Activated CD4-positive, alpha-beta T cell treated with anti-CD3 and anti-CD28 coated beads for 36 hours (primary cell): ENCODE measurements at regions of chr10 and their contacts with region 1.

Region 1: GRCh38 chr10:124461438-124462347 is at the start of gene LHPP:
- DNase-seq: peak; percentile 92
- ATAC-seq: peak; percentile 97
- H3K4me3 Mint-ChIP-seq: peak within 1 kb of the TSS; percentile 71
- H3K27ac Mint-ChIP-seq: peak within 1 kb of the TSS; percentile 96
- H3K4me1 Mint-ChIP-seq: peaks cover 25% of the 10 kb centered on the region
- H3K27me3 Mint-ChIP-seq: peaks cover 2% of the 10 kb centered on the region
- total RNA-seq, gene LHPP: 11.5 to 14.0 TPM

Region 2: GRCh38 chr10:123008439-123009205 is 1453.1 kb before region 1 on chr10 and contains the starts of genes ACADSB and IKZF5:
- CTCF ChIA-PET with region 1: no interaction called
- POLR2A ChIA-PET with region 1: no interaction called
- intact Hi-C with region 1: loop called in 1 of 2 experiments (anchors 1 kb)
- DNase-seq: peak; percentile 98
- ATAC-seq: peak; percentile 87
- H3K4me3 Mint-ChIP-seq: peak within 1 kb of the TSS; percentile 95
- H3K27ac Mint-ChIP-seq: peak within 1 kb of the TSS; percentile 99
- H3K4me1 Mint-ChIP-seq: peaks cover 42% of the 10 kb centered on the region
- H3K27me3 Mint-ChIP-seq: no peaks in the 10 kb centered on the region
- total RNA-seq, gene ACADSB: 24.0 to 25.5 TPM
- total RNA-seq, gene IKZF5: 9.4 to 14.1 TPM

Region 3: GRCh38 chr10:124145109-124145870 is 316.4 kb before region 1 on chr10:
- CTCF ChIA-PET with region 1: no interaction called
- POLR2A ChIA-PET with region 1: no interaction called
- intact Hi-C with region 1: no loop called
- DNase-seq: no peak
- ATAC-seq: no peak
- H3K4me3 Mint-ChIP-seq: no peak overlapping the region
- H3K27ac Mint-ChIP-seq: no peak overlapping the region
- H3K4me1 Mint-ChIP-seq: no peaks in the 10 kb centered on the region
- H3K27me3 Mint-ChIP-seq: peaks cover 2% of the 10 kb centered on the region

Region 4: DNA sequence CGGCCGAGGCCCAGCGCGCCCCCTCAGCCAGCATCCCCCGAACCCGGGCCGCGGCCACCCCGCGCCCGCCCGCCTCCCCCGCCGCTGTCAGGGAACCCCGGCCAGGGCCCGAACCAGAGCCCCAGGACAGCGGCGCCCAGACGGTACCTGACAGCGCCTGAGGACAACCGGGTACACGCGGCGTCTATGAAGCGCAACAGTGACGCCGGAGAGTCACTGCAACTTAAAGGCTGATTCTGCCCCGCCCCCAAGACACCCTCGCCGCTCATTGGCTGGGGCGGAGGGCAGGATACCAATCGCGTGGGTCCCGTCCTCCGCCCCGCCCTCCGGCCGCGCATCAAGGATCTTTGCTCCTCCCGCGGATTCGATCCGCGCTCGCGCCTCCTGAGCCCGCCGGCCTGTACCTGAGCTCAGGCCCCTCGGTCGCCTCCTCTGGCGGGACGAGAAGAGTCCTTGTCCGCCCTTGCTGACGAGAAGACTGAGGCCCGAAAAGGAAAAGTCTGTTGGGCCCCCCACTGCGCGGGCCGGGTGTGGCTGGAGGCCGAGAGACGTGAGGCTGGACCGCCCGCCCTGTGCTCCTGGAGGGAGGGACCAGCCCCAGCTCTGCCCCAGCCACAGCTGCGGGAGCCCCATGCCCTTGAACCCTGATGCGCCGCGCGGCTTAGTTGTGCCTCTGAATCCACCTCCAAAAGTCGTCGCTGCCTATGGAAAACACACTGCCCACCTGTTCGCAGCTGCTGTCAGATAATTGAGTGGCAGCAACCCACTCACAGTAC is 42.8 kb before region 1 on chr10 and contains the start of gene OAT:
- CTCF ChIA-PET with region 1: interaction called, 3 read pairs
- POLR2A ChIA-PET with region 1: no interaction called
- intact Hi-C with region 1: loop called (anchors 1 kb)
- DNase-seq: peak; percentile 99
- ATAC-seq: peak; percentile 98
- H3K4me3 Mint-ChIP-seq: peak within 1 kb of the TSS; percentile 78
- H3K27ac Mint-ChIP-seq: peak within 1 kb of the TSS; percentile 21
- H3K4me1 Mint-ChIP-seq: peaks cover 16% of the 10 kb centered on the region
- H3K27me3 Mint-ChIP-seq: no peaks in the 10 kb centered on the region
- total RNA-seq, gene OAT: 36.5 to 39.6 TPM

Region 5: GRCh38 chr10:124477614-124478363 is 16.1 kb after region 1 on chr10:
- CTCF ChIA-PET with region 1: no interaction called
- POLR2A ChIA-PET with region 1: no interaction called
- intact Hi-C with region 1: no loop called
- DNase-seq: no peak
- ATAC-seq: no peak
- H3K4me3 Mint-ChIP-seq: no peak overlapping the region
- H3K27ac Mint-ChIP-seq: no peak overlapping the region
- H3K4me1 Mint-ChIP-seq: peaks cover 2% of the 10 kb centered on the region
- H3K27me3 Mint-ChIP-seq: no peaks in the 10 kb centered on the region

Region 6: GRCh38 chr10:124802313-124802675 is 340.6 kb after region 1 on chr10:
- CTCF ChIA-PET with region 1: no interaction called
- POLR2A ChIA-PET with region 1: interaction called, 7 read pairs
- intact Hi-C with region 1: loop called (anchors 1 to 2 kb)
- DNase-seq: no peak
- ATAC-seq: peak; percentile 43
- H3K4me3 Mint-ChIP-seq: peak overlapping the region; percentile 91
- H3K27ac Mint-ChIP-seq: peak overlapping the region; percentile 90
- H3K4me1 Mint-ChIP-seq: peaks cover 19% of the 10 kb centered on the region
- H3K27me3 Mint-ChIP-seq: no peaks in the 10 kb centered on the region

Region 7: DNA sequence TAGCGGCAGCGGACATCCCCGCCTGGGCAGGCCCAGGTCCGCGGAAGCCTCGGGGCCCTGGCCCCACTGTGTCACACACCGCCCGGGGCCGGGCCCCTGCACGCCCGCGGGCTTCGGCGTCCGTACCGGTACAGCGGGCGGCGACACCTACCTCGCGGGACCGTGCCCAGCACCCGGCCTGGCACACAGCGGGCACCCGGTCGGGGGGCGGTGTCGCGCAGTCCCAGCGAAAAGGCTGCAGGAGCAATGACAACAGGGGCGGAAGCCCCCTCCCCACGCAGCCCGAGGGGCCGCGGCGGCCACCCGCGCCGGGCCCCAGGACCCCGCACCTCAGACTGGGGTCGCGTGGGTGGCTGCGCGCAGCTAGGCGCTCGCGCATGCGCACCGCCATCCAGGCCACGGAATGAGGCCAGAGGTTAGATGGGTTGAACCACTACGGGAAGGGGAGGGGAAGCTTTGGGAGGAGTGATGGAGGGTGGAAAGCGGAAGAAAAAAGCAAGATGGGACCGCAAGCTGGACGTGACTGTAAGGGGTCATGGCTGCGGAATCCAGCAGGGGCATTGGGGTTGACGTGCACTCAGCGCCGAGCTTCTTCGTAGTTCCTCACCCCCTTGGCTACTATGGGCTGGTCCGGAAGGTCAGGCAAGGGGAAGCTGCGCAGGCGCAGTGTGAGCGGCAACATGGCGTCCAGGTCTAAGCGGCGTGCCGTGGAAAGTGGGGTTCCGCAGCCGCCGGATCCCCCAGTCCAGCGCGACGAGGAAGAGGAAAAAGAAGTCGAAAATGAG is 1361.4 kb after region 1 on chr10 and contains the starts of genes BCCIP and UROS:
- CTCF ChIA-PET with region 1: no interaction called
- POLR2A ChIA-PET with region 1: no interaction called
- intact Hi-C with region 1: loop called in 1 of 2 experiments (anchors 5 kb)
- DNase-seq: peak; percentile 94
- ATAC-seq: peak; percentile 87
- H3K4me3 Mint-ChIP-seq: peak within 1 kb of the TSS; percentile 68
- H3K27ac Mint-ChIP-seq: peak within 1 kb of the TSS; percentile 27
- H3K4me1 Mint-ChIP-seq: peaks cover 42% of the 10 kb centered on the region
- H3K27me3 Mint-ChIP-seq: no peaks in the 10 kb centered on the region
- total RNA-seq, gene BCCIP: 106 to 115 TPM
- total RNA-seq, gene UROS: 37.3 to 39.6 TPM